ENCODE measurements at regions of chr16 and their contacts with region 1.

Region 1: DNA sequence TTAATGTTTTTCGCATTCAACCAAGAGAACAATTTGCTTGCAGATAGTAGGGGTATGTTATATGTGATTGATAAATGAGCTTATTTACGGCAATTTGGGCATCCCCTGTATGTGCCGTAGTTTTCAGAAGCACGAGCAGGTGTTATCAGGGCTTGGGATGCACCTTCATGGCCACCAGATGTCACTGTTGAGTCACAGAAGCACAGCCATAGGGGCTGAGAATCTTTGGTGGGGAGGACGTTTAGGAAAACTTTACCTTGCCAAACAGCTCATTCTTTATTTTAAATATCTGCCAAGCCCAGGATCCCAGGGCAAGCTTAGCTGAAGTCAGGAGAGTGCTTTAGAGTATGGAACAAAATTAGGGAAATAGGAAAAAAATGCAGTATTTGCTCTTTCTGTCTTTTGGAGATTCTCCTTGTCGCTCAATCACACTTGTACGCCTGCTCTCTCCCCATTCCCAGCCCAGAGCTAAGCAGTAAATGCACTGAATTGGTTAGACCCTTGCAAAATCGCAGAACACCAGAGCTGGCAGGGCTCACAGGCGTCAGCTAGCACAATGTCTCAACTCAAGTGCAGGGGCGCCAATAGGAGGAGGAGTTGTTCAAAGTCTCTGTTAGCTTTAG is 93.6 kb upstream of the MPHOSPH6 start:
- DNase-seq: peak; percentile 5
- ATAC-seq: peak; percentile 97
- H3K4me3 ChIP-seq: no peak overlapping the region
- H3K27ac ChIP-seq: no peak overlapping the region
- H3K4me1 ChIP-seq: no peaks in the 10 kb centered on the region
- H3K27me3 ChIP-seq: peaks cover 0 to 2% of the 10 kb centered on the region in 2 experiments; a peak in 1 of 4 replicates
- CTCF ChIP-seq: peak; percentile 87 to 95 (median 92)
- EP300 ChIP-seq: no peak
- POLR2A ChIP-seq: no peak
- RAD21 ChIP-seq: peak; percentile 88

Region 2: GRCh38 chr16:81798311-81799137 is 465.1 kb before region 1 on chr16:
- CTCF ChIA-PET with region 1: no interaction called
- POLR2A ChIA-PET with region 1: no interaction called
- RAD21 ChIA-PET with region 1: no interaction called
- SMC1A ChIA-PET with region 1: no interaction called
- in situ Hi-C with region 1: no loop called
- intact Hi-C with region 1: no loop called
- DNase-seq: peak; percentile 97
- ATAC-seq: peak; percentile 76
- H3K4me3 ChIP-seq: peak overlapping the region; percentile 62
- H3K27ac ChIP-seq: peak overlapping the region; percentile 98
- H3K4me1 ChIP-seq: peaks cover 52% of the 10 kb centered on the region
- H3K27me3 ChIP-seq: no peaks in the 10 kb centered on the region
- CTCF ChIP-seq: peak in 2 of 3 experiments; percentile 27 to 36; a peak in 4 of 6 replicates
- EP300 ChIP-seq: peak; percentile 80 to 84; a peak in 3 of 4 replicates
- POLR2A ChIP-seq: peak; percentile 50; the same call in 1 of the 2 replicates
- RAD21 ChIP-seq: no peak; the same call in 1 of the 2 replicates

Region 3: DNA sequence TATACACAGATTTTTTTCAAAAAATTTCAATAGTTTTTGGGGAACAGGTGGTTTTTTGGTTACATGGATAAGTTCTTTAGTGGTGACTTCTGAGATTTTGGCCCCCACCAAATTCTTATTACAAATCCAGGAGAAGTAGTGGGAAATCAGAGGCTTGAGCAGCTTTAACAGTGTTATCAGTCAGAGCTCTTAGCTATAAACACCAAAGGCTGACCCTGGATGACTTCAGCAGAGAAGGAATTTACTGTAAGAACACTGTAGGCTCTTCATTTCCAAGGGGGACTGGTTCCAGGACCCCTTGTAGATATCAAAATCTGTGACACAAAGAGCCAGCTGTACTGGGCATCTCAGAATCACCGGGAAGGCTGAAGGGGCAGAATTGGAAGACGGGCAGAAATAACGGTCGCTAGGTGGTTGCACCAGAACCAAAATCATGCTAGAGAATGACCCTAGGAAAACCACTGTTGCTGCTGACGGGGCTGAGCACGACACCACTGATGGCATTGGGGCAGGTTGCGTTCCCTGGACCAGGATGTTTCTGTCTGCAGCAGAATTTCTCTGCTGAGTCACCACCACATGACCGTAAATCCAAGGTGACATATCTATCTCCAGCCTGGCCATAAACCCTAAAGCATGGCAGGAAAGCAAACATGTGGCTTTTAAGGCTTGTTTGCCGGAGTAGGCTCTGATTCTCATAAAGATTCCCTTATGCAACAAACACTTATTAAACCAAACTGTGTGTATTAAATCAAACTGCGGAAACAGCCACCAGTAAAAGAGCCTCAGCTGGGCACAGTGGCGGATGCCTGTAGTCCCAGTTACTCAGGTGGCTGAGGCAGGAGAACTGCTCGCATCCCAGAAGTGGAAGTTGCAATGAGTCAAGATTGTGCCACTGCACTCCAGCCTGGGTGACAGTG is 111.2 kb before region 1 on chr16:
- CTCF ChIA-PET with region 1: no interaction called
- POLR2A ChIA-PET with region 1: no interaction called
- RAD21 ChIA-PET with region 1: no interaction called
- SMC1A ChIA-PET with region 1: no interaction called
- in situ Hi-C with region 1: no loop called
- intact Hi-C with region 1: no loop called
- DNase-seq: no peak
- ATAC-seq: no peak
- H3K4me3 ChIP-seq: no peak overlapping the region
- H3K27ac ChIP-seq: no peak overlapping the region
- H3K4me1 ChIP-seq: no peaks in the 10 kb centered on the region
- H3K27me3 ChIP-seq: no peaks in the 10 kb centered on the region
- CTCF ChIP-seq: no peak
- EP300 ChIP-seq: no peak
- POLR2A ChIP-seq: no peak
- RAD21 ChIP-seq: no peak

Region 4: GRCh38 chr16:82248677-82249076 is 15.0 kb before region 1 on chr16:
- CTCF ChIA-PET with region 1: interaction called, 27 read pairs
- POLR2A ChIA-PET with region 1: no interaction called
- RAD21 ChIA-PET with region 1: no interaction called
- SMC1A ChIA-PET with region 1: interaction called, 9 read pairs
- in situ Hi-C with region 1: no loop called
- intact Hi-C with region 1: no loop called
- DNase-seq: no peak
- ATAC-seq: no peak
- H3K4me3 ChIP-seq: no peak overlapping the region
- H3K27ac ChIP-seq: no peak overlapping the region
- H3K4me1 ChIP-seq: no peaks in the 10 kb centered on the region
- H3K27me3 ChIP-seq: no peaks in the 10 kb centered on the region; a peak in 1 of 4 replicates
- CTCF ChIP-seq: no peak
- EP300 ChIP-seq: no peak
- POLR2A ChIP-seq: no peak
- RAD21 ChIP-seq: no peak

Region 5: DNA sequence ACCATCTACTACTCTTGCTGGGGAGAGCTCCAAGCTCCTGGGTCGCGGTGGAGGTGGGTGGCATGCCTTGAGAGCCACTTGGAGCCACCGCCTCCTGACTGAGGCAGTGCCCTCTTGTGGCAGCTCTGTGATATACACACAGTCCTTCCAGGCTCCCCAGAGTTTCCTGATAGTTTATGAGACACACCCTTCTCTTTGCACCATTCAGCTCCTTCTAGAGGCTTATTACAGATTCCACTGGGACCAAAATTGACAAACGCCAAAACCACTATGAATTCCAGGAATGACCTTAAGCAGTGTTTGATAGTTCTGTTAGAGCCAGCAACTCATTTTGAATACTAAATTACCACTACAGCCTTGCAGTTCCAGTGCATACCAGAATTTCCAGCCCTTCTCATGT is 193.1 kb after region 1 on chr16:
- CTCF ChIA-PET with region 1: interaction called, 49 read pairs
- POLR2A ChIA-PET with region 1: no interaction called
- RAD21 ChIA-PET with region 1: interaction called, 18 read pairs
- SMC1A ChIA-PET with region 1: interaction called, 23 read pairs
- in situ Hi-C with region 1: no loop called
- intact Hi-C with region 1: loop called (anchors 1 kb)
- DNase-seq: no peak
- ATAC-seq: peak; percentile 98
- H3K4me3 ChIP-seq: no peak overlapping the region
- H3K27ac ChIP-seq: no peak overlapping the region
- H3K4me1 ChIP-seq: no peaks in the 10 kb centered on the region
- H3K27me3 ChIP-seq: no peaks in the 10 kb centered on the region; a peak in 1 of 4 replicates
- CTCF ChIP-seq: peak; percentile 67 to 82 (median 73)
- EP300 ChIP-seq: no peak
- POLR2A ChIP-seq: no peak
- RAD21 ChIP-seq: peak; percentile 49

Region 6: GRCh38 chr16:82626791-82627261 is 363.2 kb after region 1 on chr16 and contains the start of gene CDH13:
- CTCF ChIA-PET with region 1: interaction called, 4 read pairs
- POLR2A ChIA-PET with region 1: no interaction called
- RAD21 ChIA-PET with region 1: no interaction called
- SMC1A ChIA-PET with region 1: interaction called, 3 read pairs
- in situ Hi-C with region 1: loop called (anchors 10 kb)
- intact Hi-C with region 1: no loop called
- DNase-seq: no peak
- ATAC-seq: no peak
- H3K4me3 ChIP-seq: no peak within 1 kb of the TSS
- H3K27ac ChIP-seq: no peak within 1 kb of the TSS
- H3K4me1 ChIP-seq: no peaks in the 10 kb centered on the region
- H3K27me3 ChIP-seq: peaks cover 11% of the 10 kb centered on the region in 2 experiments
- CTCF ChIP-seq: no peak
- EP300 ChIP-seq: no peak
- POLR2A ChIP-seq: no peak
- RAD21 ChIP-seq: no peak
- polyA plus RNA-seq, gene CDH13: not detected

Region 7: DNA sequence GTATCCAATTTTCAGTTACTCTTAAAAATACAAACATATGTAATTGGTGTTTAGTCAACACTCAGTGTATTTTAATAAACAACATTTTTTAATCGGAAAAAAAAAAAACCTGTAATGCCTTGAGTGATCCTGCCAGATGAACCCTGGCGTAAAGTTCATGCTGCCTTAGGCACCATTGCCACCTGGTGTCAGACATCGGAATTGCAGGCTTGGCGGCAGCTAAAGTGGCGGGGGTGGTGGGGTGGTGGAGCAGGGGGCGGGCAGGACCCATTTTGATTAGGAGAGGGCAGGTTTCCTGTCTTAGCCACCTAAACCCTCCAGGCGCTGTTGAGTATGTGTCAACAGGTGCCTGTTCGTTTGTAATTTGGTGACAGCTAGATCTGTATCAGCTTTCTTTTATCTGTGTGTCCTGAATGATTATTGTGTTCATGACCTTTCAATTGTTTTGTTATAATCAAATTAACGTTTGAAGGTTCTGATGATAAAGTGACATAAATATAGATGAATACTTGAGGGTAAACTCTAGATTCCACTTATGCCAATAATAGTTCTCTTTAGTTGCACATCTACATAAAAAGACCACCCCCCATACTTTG is 951.9 kb after region 1 on chr16:
- CTCF ChIA-PET with region 1: interaction called, 12 read pairs
- POLR2A ChIA-PET with region 1: no interaction called
- RAD21 ChIA-PET with region 1: no interaction called
- SMC1A ChIA-PET with region 1: interaction called, 6 read pairs
- in situ Hi-C with region 1: loop called (anchors 5 kb)
- intact Hi-C with region 1: loop called (anchors 5 kb)
- DNase-seq: no peak
- ATAC-seq: peak; percentile 68
- H3K4me3 ChIP-seq: no peak overlapping the region
- H3K27ac ChIP-seq: no peak overlapping the region
- H3K4me1 ChIP-seq: no peaks in the 10 kb centered on the region
- H3K27me3 ChIP-seq: no peaks in the 10 kb centered on the region
- CTCF ChIP-seq: peak; percentile 58 to 86 (median 80)
- EP300 ChIP-seq: no peak
- POLR2A ChIP-seq: no peak
- RAD21 ChIP-seq: peak; percentile 85